Sciatic nerve (tissue), 2 donors: ENCODE measurements at regions of chr15 and their contacts with region 1.

Region 1: DNA sequence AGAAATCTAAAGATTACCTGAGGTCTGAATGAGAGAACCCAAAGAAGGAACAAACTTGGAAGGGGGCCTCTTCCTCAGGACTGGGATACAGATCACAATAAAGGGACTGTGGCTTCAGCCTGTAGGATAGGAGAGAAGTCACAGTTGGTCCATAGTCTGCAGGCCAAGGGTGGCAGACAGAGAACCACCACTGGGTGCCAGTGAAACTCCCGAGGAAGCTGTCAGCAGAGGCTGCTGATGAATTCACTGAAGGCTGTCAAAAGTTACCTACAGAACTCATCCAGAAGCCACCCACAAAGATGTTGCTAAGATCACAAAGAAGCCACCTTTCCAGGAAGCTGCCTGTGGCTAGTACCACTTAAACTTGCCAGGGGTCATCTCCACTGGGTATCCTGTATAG is 78.5 kb downstream of the TMCO5A start:
- DNase-seq: no peak
- ATAC-seq: no peak

Region 2: GRCh38 chr15:37824717-37825382 is 188.0 kb before region 1 on chr15:
- intact Hi-C with region 1: no loop called
- DNase-seq: no peak
- ATAC-seq: no peak

Region 3: DNA sequence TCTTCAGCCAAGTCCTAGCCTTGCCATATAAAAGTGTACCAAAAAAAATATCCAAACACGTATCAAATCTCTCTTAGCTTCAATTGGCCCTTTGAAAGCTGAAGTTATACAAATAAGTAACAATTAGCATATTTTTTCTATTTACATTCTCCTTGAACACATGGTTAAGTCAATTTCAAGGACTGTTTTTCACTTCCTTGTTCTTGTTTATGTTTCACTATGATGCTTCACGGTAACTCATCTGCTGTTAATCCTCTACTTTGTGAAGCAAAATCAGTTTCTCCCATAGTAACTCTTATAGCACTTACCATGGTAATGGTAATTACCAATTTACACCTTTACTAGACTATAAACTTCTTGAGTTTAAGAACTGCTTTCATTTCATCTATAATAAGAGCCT is 229.2 kb after region 1 on chr15:
- intact Hi-C with region 1: loop called (anchors 10 kb)
- DNase-seq: no peak
- ATAC-seq: no peak